Prostate gland (tissue), 2 donors: ENCODE measurements at regions of chr3 and their contacts with region 1.

Region 1: DNA sequence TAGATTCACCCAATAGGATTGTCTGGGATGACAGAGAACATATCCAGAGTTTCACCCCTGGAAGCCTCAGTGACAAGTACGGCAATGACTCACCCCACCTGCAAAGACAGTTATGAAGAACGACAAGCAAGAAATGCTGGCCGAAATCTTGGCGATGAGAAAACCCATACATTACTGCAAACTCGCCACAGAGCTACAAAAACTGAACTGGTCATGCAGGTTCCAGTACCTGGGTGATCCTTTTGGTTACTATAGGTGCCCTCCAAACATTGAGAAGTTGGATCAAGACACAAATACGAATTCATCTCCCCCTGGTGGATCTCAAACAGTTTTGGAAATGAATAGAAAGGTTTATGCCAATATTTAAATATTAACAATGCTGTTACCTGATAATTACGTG is 450.6 kb downstream of the SOX2 start:
- DNase-seq: no peak
- H3K4me3 ChIP-seq: no peak overlapping the region
- H3K27ac ChIP-seq: no peak overlapping the region
- H3K4me1 ChIP-seq: no peaks in the 10 kb centered on the region
- H3K27me3 ChIP-seq: no peaks in the 10 kb centered on the region
- CTCF ChIP-seq: no peak
- POLR2A ChIP-seq: no peak

Region 2: DNA sequence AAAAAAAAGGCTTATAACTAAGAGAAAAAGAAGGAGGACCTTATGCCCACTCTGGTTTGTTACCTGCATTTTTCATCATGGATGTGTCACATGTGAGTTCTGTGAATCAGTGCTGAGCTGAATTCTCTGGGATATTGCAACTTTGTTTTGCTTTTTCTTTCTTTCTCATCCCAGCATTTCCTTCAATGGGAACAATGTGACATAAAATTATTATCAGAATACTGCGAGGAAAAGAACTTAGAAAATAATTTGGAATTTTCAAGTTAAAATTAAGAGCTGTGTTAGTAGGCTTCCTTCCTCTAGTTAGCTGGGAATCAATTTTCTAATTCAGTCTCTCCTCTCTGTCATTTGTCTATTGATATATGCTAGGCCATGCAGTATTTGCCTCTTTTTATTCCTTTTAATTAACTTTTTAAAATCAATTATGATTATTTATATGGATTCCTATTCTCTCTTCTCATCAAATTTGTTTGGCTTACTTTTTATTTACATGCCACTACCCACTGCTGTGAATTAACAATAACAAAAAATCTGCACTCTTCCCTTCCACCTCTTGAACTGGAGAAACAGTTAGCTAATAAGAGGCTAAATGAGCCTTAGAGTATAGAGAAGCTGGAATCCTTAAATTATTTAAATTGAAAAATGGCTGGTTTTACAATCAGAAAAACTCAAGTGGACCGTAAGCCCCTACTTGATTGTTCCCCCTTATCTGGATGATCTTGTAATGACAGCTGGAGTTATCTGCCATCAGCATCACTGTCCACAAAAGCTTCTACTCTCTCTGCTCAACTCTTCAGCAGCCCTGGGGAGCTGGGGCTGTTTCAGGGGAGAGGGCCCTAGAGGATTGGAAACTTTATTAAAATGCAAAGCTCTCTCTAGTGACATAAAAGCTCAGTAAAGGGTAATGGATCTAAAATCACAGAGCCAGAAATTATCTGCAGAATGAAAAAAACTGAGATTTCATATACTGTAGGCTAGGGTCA is 545.9 kb before region 1 on chr3:
- intact Hi-C with region 1: loop called (anchors 5 kb)
- DNase-seq: no peak
- H3K4me3 ChIP-seq: no peak overlapping the region
- H3K27ac ChIP-seq: no peak overlapping the region
- H3K4me1 ChIP-seq: no peaks in the 10 kb centered on the region
- H3K27me3 ChIP-seq: no peaks in the 10 kb centered on the region
- CTCF ChIP-seq: no peak
- POLR2A ChIP-seq: no peak

Region 3: DNA sequence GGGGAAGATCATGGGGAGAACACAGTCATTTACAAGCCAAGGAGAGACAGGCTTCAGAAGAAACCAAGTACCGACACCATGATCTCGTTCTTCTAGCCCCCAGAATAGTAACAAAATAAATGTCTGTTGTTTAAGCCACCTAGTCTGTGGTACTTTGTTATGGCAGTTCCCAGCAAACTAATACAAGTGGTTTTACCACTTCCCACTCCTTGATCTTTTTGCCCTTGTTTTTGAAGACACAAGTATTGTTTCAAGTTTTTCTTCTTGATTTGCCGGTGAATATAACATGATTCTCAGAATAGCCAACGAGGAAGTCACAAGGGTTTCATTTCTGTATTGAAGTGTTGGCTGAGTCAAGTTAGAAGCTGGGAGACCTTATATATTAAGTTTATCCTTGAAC is 230.3 kb before region 1 on chr3:
- intact Hi-C with region 1: no loop called
- DNase-seq: no peak
- H3K4me3 ChIP-seq: no peak overlapping the region
- H3K27ac ChIP-seq: no peak overlapping the region
- H3K4me1 ChIP-seq: no peaks in the 10 kb centered on the region
- H3K27me3 ChIP-seq: no peaks in the 10 kb centered on the region
- CTCF ChIP-seq: no peak
- POLR2A ChIP-seq: no peak